HCT116 (cell line): ENCODE measurements at regions of chr15 and their contacts with region 1.

Region 1: DNA sequence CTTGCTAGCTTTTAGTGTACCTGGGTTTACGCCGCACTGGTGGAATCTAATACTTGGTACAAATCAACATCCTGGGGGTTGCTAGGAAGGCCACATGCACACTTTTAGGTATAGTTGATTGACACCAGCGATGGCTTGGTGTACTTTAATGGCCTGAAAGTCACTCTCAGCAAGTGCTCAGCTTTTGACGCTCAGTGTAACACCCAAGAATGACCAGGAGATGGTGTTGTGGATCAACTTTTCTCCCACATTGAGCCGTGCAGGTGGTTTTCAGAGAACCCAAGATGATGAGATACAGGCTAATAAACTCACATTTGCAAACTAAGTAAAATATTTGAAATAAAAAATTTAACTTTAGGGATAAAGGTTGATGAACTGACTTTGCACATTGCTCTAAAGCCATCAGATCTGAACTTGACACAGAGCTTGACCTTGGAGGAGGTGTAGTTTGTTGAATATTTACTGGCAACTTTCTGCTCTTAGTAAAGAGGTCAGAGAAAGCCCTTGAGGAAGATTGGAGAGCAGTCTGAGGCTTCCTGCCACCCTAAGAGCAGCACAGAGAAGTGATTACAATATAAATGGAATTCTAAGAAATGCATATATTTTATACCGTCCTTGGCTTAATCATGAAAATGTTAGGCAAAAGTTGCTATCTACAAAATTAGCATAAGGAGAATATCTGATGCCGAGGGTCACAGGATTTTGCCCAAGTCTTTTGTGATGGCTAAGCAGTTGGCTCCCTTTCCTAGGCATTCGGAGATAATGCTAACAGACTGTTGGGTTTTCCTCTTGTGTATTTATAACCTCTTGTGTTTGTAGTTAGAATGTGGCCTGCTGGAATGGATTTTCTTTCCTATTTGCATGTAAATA is 143.4 kb upstream of the RASGRP1 start:
- DNase-seq: peak; percentile 53
- ATAC-seq: peak; percentile 95
- H3K4me3 ChIP-seq: no peak overlapping the region
- H3K27ac ChIP-seq: no peak overlapping the region
- H3K4me1 ChIP-seq: no peaks in the 10 kb centered on the region
- H3K27me3 ChIP-seq: peaks cover 20% of the 10 kb centered on the region
- CTCF ChIP-seq: peak; percentile 40 to 70 (median 67); a peak in 5 of 6 replicates
- POLR2A ChIP-seq: no peak
- RAD21 ChIP-seq: peak; percentile 69

Region 2: GRCh38 chr15:38817427-38818156 is 109.6 kb after region 1 on chr15:
- CTCF ChIA-PET with region 1: no interaction called
- POLR2A ChIA-PET with region 1: no interaction called
- RAD21 ChIA-PET with region 1: no interaction called
- intact Hi-C with region 1: loop called (anchors 5 kb)
- DNase-seq: peak; percentile 65
- ATAC-seq: peak; percentile 100
- H3K4me3 ChIP-seq: no peak overlapping the region
- H3K27ac ChIP-seq: no peak overlapping the region
- H3K4me1 ChIP-seq: no peaks in the 10 kb centered on the region; a peak in 1 of 4 replicates
- H3K27me3 ChIP-seq: no peaks in the 10 kb centered on the region; the same call in 1 of the 2 replicates
- CTCF ChIP-seq: peak; percentile 98 to 100 (median 100)
- POLR2A ChIP-seq: no peak
- RAD21 ChIP-seq: peak; percentile 83

Region 3: GRCh38 chr15:38991126-38991525 is 283.1 kb after region 1 on chr15:
- CTCF ChIA-PET with region 1: interaction called, 6 read pairs
- POLR2A ChIA-PET with region 1: no interaction called
- RAD21 ChIA-PET with region 1: no interaction called
- intact Hi-C with region 1: loop called (anchors 2 kb)
- DNase-seq: peak; percentile 8
- ATAC-seq: no peak
- H3K4me3 ChIP-seq: no peak overlapping the region
- H3K27ac ChIP-seq: no peak overlapping the region
- H3K4me1 ChIP-seq: no peaks in the 10 kb centered on the region
- H3K27me3 ChIP-seq: no peaks in the 10 kb centered on the region
- CTCF ChIP-seq: peak in 2 of 3 experiments; percentile 35 to 56; a peak in 4 of 6 replicates
- POLR2A ChIP-seq: no peak
- RAD21 ChIP-seq: peak; percentile 33